ENCODE measurements at regions of chr11 and their contacts with region 1.

Region 1: DNA sequence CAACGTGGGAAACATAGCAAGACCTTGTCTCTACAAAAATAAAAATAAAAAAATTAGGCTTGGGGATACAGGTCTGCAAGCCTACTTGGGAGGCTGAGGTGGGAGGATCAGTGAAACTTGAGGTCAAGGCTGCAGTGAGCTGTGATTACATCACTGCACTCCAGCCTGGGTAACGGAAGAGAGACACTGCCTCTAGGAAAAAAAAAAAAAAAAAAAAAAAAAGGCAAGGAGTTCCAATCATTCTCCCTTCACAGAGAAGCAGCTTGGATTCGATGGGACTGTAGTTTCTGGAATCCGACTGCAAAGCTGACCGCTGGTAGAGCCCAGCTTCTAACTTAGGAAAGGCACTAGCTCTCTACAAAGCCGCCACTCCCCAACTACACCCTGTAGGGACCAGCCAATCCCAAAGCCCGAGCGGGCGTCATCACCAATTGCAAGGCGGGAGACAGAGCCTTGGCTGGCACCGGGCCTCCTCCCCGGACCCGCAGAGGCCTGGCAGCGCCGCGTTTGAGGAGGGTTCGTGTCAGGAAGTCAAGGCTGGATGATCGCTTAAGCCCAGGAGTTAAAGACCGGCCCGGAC is 699 bp upstream of the DDB2 start:
- DNase-seq: peak; percentile 64 to 85 (median 76)
- ATAC-seq: peak; percentile 86
- H3K4me3 ChIP-seq: peak overlapping the region; percentile 89
- H3K4me3 Mint-ChIP-seq: peak overlapping the region; percentile 92 to 100 (median 96)
- H3K27ac ChIP-seq: peak overlapping the region; percentile 85
- H3K27ac Mint-ChIP-seq: peak overlapping the region; percentile 96 to 100 (median 99)
- H3K4me1 ChIP-seq: peaks cover 3 to 21% of the 10 kb centered on the region in 2 donors
- H3K4me1 Mint-ChIP-seq: peaks cover 26 to 39% (median 32%) of the 10 kb centered on the region in 7 donors
- H3K27me3 ChIP-seq: no peaks in the 10 kb centered on the region
- H3K27me3 Mint-ChIP-seq: no peaks in the 10 kb centered on the region

Region 2: GRCh38 chr11:46845740-46846509 is 368.1 kb before region 1 on chr11 and contains the start of gene CKAP5:
- CTCF ChIA-PET with region 1: no interaction called
- POLR2A ChIA-PET with region 1: no interaction called
- intact Hi-C with region 1: loop called in 1 of 2 experiments (anchors 1 kb)
- DNase-seq: peak; percentile 63 to 89 (median 80)
- ATAC-seq: peak; percentile 96
- H3K4me3 ChIP-seq: peak within 1 kb of the TSS; percentile 71
- H3K4me3 Mint-ChIP-seq: peak within 1 kb of the TSS; percentile 85 to 99 (median 97)
- H3K27ac ChIP-seq: peak within 1 kb of the TSS; percentile 71
- H3K27ac Mint-ChIP-seq: peak within 1 kb of the TSS; percentile 88 to 97 (median 93)
- H3K4me1 ChIP-seq: peaks cover 0 to 14% of the 10 kb centered on the region in 2 donors
- H3K4me1 Mint-ChIP-seq: peaks cover 33 to 50% (median 43%) of the 10 kb centered on the region in 7 donors
- H3K27me3 ChIP-seq: no peaks in the 10 kb centered on the region
- H3K27me3 Mint-ChIP-seq: no peaks in the 10 kb centered on the region
- total RNA-seq, gene CKAP5: 28.3 to 126 (median 46.0) TPM

Region 3: DNA sequence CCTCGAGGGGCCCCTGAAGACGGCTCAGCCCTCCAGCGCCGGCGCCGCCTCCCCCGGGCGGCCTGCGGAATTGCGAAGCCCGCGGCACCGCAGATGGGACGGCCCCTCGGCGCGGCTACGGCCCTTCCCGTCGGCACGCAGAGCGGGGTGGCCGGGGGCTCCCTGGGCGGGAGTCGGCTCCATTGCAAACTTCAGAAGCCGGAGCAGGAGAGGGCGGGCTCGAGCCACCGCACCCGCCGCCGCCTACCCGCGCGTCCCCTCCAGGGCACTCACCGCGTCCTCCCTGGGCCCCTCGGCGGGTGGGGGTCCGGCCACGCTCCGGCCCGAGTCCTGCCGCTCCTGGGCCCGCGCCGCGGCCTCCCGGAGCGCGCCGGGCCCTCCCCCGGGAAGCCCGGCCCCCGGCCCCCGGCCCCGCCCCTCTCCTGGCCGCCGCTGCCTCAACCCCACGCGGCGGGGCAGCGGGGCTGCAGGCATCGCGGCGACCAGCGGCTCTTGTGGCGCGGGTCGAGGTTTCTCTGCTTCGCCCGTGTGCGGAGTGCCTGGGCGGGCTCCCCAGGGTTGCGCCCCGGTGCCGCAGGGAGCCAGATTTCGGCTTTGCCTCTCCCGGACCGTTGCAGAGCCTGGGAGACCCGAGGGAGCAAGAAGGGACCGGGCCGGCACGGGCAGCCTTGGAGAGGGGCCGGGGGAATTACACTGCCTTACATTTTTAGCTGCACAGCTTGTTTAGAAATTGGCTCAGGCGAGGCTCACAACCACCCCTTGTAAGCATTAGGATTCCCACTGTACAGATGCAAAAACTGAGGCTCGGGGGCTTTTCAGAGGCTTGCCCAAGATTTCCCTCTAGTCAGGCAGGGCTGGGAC is 27.8 kb before region 1 on chr11 and contains the start of gene PACSIN3:
- CTCF ChIA-PET with region 1: interaction called, 4 read pairs
- POLR2A ChIA-PET with region 1: interaction called, 13 read pairs
- intact Hi-C with region 1: loop called in 1 of 2 experiments (anchors 1 kb)
- DNase-seq: peak in 6 of 9 donors; percentile 22 to 66 (median 32)
- ATAC-seq: peak; percentile 75
- H3K4me3 ChIP-seq: peak within 1 kb of the TSS; percentile 54
- H3K4me3 Mint-ChIP-seq: peak within 1 kb of the TSS; percentile 79 to 89 (median 82)
- H3K27ac ChIP-seq: no peak within 1 kb of the TSS
- H3K27ac Mint-ChIP-seq: peak within 1 kb of the TSS in 4 of 9 donors; percentile 17 to 83 (median 27)
- H3K4me1 ChIP-seq: peaks cover 7 to 12% of the 10 kb centered on the region in 2 donors
- H3K4me1 Mint-ChIP-seq: peaks cover 0 to 9% (median 5%) of the 10 kb centered on the region in 7 donors
- H3K27me3 ChIP-seq: peaks cover 0 to 14% of the 10 kb centered on the region in 2 donors
- H3K27me3 Mint-ChIP-seq: peaks cover 4 to 44% (median 13%) of the 10 kb centered on the region in 5 donors
- total RNA-seq, gene PACSIN3: 0.34 to 4.3 TPM in 2 of 5 experiments, not detected in the others

Region 4: DNA sequence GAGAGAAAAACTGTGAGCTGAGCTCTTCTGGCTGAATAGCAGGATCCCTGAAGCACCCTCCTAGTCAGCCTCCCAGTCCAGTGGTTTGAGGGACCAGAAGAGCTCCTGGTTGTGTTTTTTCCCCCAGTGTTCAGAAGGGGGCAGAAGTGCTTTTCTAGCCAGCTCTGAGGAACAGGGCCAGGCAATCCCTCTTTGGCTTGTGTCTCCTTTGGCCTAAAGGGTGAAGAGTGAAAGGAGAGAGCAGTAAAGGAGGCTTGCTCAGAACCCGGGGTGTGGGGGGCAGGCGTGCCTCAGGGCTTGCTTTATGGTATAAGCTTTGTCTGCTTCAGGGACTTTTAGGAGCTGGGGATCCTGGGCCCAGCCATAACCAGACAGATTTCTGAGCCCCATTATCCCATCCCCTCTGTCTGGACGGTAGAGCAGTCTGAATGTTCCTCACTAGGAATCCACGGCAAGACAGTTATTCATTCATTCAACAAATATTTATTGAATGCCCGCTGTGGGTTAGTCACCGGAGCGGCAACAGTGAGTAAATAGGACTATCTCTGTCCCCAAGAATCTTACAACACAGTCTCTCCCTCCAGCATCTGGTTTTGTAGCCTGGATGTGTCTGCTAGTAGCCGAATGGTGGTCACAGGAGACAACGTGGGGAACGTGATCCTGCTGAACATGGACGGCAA is 20.1 kb after region 1 on chr11:
- CTCF ChIA-PET with region 1: interaction called, 14 read pairs
- POLR2A ChIA-PET with region 1: interaction called, 59 read pairs
- intact Hi-C with region 1: loop called in 1 of 2 experiments (anchors 1 kb)
- DNase-seq: peak in 6 of 9 donors; percentile 17 to 46 (median 32)
- ATAC-seq: peak; percentile 8
- H3K4me3 ChIP-seq: peak overlapping the region; percentile 38
- H3K4me3 Mint-ChIP-seq: peak overlapping the region; percentile 35 to 90 (median 80)
- H3K27ac ChIP-seq: peak overlapping the region; percentile 81
- H3K27ac Mint-ChIP-seq: peak overlapping the region; percentile 77 to 99 (median 94)
- H3K4me1 ChIP-seq: peaks cover 5 to 13% of the 10 kb centered on the region in 2 donors
- H3K4me1 Mint-ChIP-seq: peaks cover 11 to 34% (median 30%) of the 10 kb centered on the region in 7 donors
- H3K27me3 ChIP-seq: no peaks in the 10 kb centered on the region
- H3K27me3 Mint-ChIP-seq: no peaks in the 10 kb centered on the region

Region 5: DNA sequence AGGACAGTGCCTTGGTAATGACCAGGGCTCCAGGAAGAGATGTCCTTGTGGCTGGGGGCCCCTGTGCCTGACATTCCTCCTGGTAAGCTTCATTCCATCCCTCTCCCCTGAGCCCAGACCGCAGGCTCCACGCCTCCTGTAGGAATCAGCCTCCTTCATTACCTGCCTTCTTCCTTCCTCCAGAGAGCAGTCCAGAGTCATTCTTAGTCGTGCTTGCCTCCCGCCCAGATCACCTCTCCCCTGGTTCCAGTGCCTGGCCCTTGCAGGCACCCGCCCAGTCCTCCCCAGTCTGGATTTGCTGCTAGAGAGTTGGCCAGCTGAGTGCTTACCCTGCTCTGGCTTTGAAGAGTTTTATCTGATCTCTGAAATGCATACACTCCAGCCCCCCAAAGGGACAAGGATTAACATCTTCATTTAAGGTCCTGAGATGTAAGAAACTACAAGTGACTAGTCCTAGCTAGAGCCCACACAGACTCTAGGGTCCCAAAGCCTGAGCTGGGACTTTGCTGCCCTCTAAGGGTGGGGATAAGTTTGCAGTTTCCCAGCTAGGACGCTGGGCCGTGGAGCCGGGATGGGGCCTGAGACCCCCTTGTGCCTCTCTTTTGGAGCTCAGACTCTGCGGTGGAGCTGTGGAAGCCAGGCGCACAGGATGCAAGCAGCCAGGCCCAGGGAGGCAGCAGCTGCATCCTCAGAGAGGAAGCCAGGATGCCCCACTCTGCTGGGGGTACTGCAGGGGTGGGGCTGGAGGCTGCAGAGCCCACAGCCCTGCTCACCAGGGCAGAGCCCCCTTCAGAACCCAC is 45.3 kb after region 1 on chr11:
- CTCF ChIA-PET with region 1: interaction called, 10 read pairs
- POLR2A ChIA-PET with region 1: interaction called, 48 read pairs
- intact Hi-C with region 1: no loop called
- DNase-seq: peak in 5 of 9 donors; percentile 23 to 42 (median 29)
- ATAC-seq: peak; percentile 80
- H3K4me3 ChIP-seq: no peak overlapping the region
- H3K4me3 Mint-ChIP-seq: no peak overlapping the region
- H3K27ac ChIP-seq: no peak overlapping the region
- H3K27ac Mint-ChIP-seq: peak overlapping the region in 1 of 9 donors; percentile 76
- H3K4me1 ChIP-seq: peaks cover 0 to 11% of the 10 kb centered on the region in 2 donors
- H3K4me1 Mint-ChIP-seq: peaks cover 11 to 28% (median 18%) of the 10 kb centered on the region in 7 donors
- H3K27me3 ChIP-seq: no peaks in the 10 kb centered on the region
- H3K27me3 Mint-ChIP-seq: no peaks in the 10 kb centered on the region

Region 6: DNA sequence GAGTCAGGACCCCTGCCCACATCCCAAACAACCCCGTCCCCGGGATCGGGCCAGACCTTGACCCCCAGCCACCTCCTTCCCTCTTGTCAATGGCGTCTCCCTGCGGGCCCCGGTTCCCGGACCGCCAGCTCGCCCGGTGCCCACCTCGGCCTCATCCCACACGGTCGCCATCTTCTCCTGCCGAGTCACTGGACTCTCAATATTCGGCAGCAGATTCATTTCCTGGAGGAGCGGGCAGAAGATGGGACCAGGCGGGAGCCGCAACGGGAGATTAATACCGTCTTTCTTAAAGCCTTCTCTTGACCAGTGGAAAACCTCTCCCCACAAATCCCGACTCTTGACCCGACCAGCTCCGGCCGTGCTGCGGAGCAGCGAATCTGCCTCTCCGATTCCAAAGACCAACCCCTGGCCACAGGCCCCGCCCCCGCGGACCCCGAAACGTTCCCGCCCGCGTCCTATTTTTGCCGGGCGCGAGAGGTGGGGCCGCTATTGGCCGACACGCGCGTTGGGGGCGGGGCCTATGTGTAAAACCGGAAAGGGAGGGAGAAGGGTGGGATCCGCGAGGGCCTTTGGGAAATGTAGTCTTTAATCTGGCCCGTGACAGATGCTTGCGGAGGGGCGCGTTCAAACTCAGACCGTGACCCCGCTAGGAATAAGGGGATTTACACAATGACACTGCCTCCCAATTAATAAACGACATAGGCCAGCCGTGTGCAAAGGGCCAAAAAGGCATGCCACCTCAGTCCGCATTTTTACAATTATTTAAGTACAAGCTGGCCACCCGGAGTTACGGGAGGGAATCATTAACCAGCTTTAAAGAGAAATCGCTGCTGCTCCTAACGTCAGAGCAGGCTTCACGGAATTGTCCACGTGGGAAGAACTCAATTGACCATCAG is 212.2 kb after region 1 on chr11 and contains the start of gene PSMC3:
- CTCF ChIA-PET with region 1: no interaction called
- POLR2A ChIA-PET with region 1: no interaction called
- intact Hi-C with region 1: loop called in 1 of 2 experiments (anchors 1 kb)
- DNase-seq: peak; percentile 92 to 99 (median 95)
- ATAC-seq: peak; percentile 98
- H3K4me3 ChIP-seq: peak within 1 kb of the TSS; percentile 95
- H3K4me3 Mint-ChIP-seq: peak within 1 kb of the TSS; percentile 91 to 99 (median 98)
- H3K27ac ChIP-seq: peak within 1 kb of the TSS; percentile 96
- H3K27ac Mint-ChIP-seq: peak within 1 kb of the TSS; percentile 93 to 99 (median 97)
- H3K4me1 ChIP-seq: peaks cover 9 to 10% of the 10 kb centered on the region in 2 donors
- H3K4me1 Mint-ChIP-seq: peaks cover 16 to 32% (median 27%) of the 10 kb centered on the region in 7 donors
- H3K27me3 ChIP-seq: no peaks in the 10 kb centered on the region
- H3K27me3 Mint-ChIP-seq: no peaks in the 10 kb centered on the region
- total RNA-seq, gene PSMC3: 42.2 to 149 (median 51.3) TPM

Region 7: DNA sequence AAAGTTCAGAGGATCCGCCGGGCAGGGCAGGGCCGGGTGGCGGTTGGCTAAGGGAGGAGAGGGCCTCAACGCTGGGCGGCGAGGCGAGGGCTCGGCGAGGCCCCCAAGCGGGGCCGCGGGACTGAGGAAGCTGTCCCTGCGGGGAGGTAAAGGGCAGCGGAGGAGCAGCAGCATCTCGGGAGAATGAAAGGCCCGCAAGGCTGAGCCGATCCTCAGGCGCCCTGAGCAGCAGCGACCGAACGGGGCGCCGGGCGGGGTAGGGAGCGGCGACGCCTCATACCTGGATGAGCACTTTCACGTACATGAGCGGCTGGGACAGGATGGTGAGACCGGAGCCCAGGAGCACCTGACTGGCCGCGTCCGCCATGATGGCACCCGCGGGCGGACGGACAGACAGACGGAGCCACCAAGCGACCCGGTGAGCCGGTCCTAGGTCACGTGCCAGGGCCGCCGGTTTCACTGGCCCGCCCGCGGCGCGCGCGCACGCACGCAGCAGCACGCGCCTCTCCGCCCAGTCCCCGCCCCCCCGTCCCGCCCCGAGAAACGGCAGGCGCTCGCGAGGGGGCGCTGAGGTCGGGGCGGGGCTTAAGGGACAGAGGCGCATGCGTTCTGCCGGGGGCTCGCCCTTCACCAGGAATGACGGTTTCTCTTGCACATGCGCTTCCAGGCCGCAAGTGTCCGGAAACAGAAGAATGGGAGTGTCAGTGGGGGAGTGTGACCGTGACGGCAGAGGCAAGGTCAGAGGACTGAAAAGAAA is 428.2 kb after region 1 on chr11 and contains the start of gene MTCH2:
- CTCF ChIA-PET with region 1: no interaction called
- POLR2A ChIA-PET with region 1: interaction called, 3 read pairs
- intact Hi-C with region 1: loop called in 1 of 2 experiments (anchors 1 kb)
- DNase-seq: peak; percentile 92 to 97 (median 95)
- ATAC-seq: peak; percentile 97
- H3K4me3 ChIP-seq: peak within 1 kb of the TSS; percentile 85
- H3K4me3 Mint-ChIP-seq: peak within 1 kb of the TSS; percentile 92 to 99 (median 96)
- H3K27ac ChIP-seq: peak within 1 kb of the TSS; percentile 83
- H3K27ac Mint-ChIP-seq: peak within 1 kb of the TSS; percentile 94 to 99 (median 97)
- H3K4me1 ChIP-seq: peaks cover 8 to 11% of the 10 kb centered on the region in 2 donors
- H3K4me1 Mint-ChIP-seq: peaks cover 17 to 32% (median 25%) of the 10 kb centered on the region in 7 donors
- H3K27me3 ChIP-seq: no peaks in the 10 kb centered on the region
- H3K27me3 Mint-ChIP-seq: no peaks in the 10 kb centered on the region
- total RNA-seq, gene MTCH2: 19.8 to 88.6 (median 21.1) TPM